ENCODE measurements at regions of chr17 and their contacts with region 1.

Region 1: GRCh38 chr17:29369831-29370735 is 20.1 kb upstream of the TAOK1 start:
- DNase-seq: peak; percentile 15 to 72 (median 56)
- H3K4me3 ChIP-seq: peak overlapping the region; percentile 29
- H3K4me3 Mint-ChIP-seq: no peak overlapping the region
- H3K27ac ChIP-seq: no peak overlapping the region
- H3K27ac Mint-ChIP-seq: no peak overlapping the region
- H3K4me1 ChIP-seq: no peaks in the 10 kb centered on the region
- H3K4me1 Mint-ChIP-seq: no peaks in the 10 kb centered on the region
- H3K27me3 ChIP-seq: no peaks in the 10 kb centered on the region
- H3K27me3 Mint-ChIP-seq: peaks cover 0 to 3% of the 10 kb centered on the region in 2 donors

Region 2: GRCh38 chr17:29283271-29283895 is 86.7 kb before region 1 on chr17:
- CTCF ChIA-PET with region 1: no interaction called
- POLR2A ChIA-PET with region 1: no interaction called
- DNase-seq: no peak
- H3K4me3 ChIP-seq: no peak overlapping the region
- H3K4me3 Mint-ChIP-seq: peak overlapping the region; percentile 16 to 81 (median 54)
- H3K27ac ChIP-seq: no peak overlapping the region
- H3K27ac Mint-ChIP-seq: peak overlapping the region; percentile 2 to 87 (median 40)
- H3K4me1 ChIP-seq: peaks cover 49% of the 10 kb centered on the region
- H3K4me1 Mint-ChIP-seq: peaks cover 57 to 82% (median 71%) of the 10 kb centered on the region in 3 donors
- H3K27me3 ChIP-seq: no peaks in the 10 kb centered on the region
- H3K27me3 Mint-ChIP-seq: peaks cover 0 to 2% of the 10 kb centered on the region in 2 donors

Region 3: DNA sequence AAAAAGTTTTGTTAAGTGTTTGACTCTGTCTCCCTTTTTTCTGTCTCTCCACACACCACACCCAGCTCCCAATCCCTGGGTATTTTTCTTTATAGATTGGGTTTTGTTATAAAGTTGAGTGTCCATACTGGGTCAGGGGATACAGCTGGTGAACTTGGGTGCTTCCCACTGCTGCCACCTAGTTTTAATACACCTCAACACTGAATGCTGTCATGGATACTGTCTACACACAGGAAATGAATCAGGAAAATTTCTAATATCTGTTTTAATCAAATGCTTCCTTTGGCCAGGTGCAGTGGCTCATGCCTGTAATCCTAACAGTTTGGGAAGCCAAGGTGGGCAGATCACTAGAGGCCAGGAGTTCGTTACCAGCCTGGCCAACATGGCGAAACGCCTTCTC is 14.8 kb after region 1 on chr17:
- CTCF ChIA-PET with region 1: interaction called, 16 read pairs
- POLR2A ChIA-PET with region 1: no interaction called
- DNase-seq: no peak
- H3K4me3 ChIP-seq: no peak overlapping the region
- H3K4me3 Mint-ChIP-seq: no peak overlapping the region
- H3K27ac ChIP-seq: no peak overlapping the region
- H3K27ac Mint-ChIP-seq: no peak overlapping the region
- H3K4me1 ChIP-seq: peaks cover 4% of the 10 kb centered on the region
- H3K4me1 Mint-ChIP-seq: peaks cover 5 to 6% (median 5%) of the 10 kb centered on the region in 3 donors
- H3K27me3 ChIP-seq: no peaks in the 10 kb centered on the region
- H3K27me3 Mint-ChIP-seq: no peaks in the 10 kb centered on the region

Region 4: DNA sequence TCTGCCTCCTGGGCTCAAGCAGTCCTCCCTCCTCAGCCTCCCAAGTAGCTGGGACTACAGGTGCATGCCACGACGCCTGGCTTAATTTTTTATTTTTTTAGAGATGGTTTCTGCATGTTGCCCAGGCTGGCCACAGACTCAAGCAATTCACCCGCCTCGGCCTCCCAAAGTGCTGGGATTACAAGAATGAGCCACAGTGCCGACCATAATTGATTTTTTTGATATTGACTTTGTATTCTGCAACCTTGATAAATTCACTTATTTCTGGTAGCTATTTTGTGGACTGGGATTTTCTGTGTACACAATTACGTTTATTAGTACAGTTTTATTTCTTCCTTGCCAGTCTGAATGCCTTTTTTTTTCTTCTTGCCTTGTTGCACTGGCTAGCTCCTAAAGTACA is 50.0 kb after region 1 on chr17:
- CTCF ChIA-PET with region 1: no interaction called
- POLR2A ChIA-PET with region 1: no interaction called
- DNase-seq: no peak
- H3K4me3 ChIP-seq: no peak overlapping the region
- H3K4me3 Mint-ChIP-seq: no peak overlapping the region
- H3K27ac ChIP-seq: no peak overlapping the region
- H3K27ac Mint-ChIP-seq: peak overlapping the region in 1 of 8 donors; percentile 66
- H3K4me1 ChIP-seq: no peaks in the 10 kb centered on the region
- H3K4me1 Mint-ChIP-seq: peaks cover 23 to 47% (median 31%) of the 10 kb centered on the region in 3 donors
- H3K27me3 ChIP-seq: no peaks in the 10 kb centered on the region
- H3K27me3 Mint-ChIP-seq: no peaks in the 10 kb centered on the region

Region 5: DNA sequence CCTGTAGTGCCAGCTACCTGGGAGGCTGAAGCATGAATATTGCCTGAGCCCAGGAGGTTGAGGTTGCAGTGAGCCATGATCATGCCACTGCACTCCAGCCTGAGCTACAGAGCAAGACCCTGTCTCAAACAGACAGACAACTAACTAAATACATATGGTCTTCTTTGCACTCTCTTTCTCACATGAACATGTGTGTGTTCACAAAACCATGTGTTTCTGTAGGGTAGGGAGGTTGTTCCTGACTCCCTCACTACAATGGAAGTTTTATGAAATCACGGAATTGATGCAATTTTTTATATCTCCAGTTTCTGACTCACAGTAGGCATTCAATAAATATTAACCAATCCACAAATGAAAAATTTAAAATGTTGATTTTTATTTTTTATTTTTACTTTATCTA is 148.3 kb after region 1 on chr17:
- CTCF ChIA-PET with region 1: interaction called, 4 read pairs
- POLR2A ChIA-PET with region 1: interaction called, 12 read pairs
- DNase-seq: no peak
- H3K4me3 ChIP-seq: no peak overlapping the region
- H3K4me3 Mint-ChIP-seq: no peak overlapping the region
- H3K27ac ChIP-seq: no peak overlapping the region
- H3K27ac Mint-ChIP-seq: no peak overlapping the region
- H3K4me1 ChIP-seq: no peaks in the 10 kb centered on the region
- H3K4me1 Mint-ChIP-seq: peaks cover 0 to 2% (median 0%) of the 10 kb centered on the region in 3 donors
- H3K27me3 ChIP-seq: no peaks in the 10 kb centered on the region
- H3K27me3 Mint-ChIP-seq: no peaks in the 10 kb centered on the region

Region 6: GRCh38 chr17:29533976-29534375 is 163.9 kb after region 1 on chr17:
- CTCF ChIA-PET with region 1: interaction called, 38 read pairs
- POLR2A ChIA-PET with region 1: no interaction called
- DNase-seq: no peak
- H3K4me3 ChIP-seq: no peak overlapping the region
- H3K4me3 Mint-ChIP-seq: no peak overlapping the region
- H3K27ac ChIP-seq: no peak overlapping the region
- H3K27ac Mint-ChIP-seq: peak overlapping the region in 2 of 8 donors; percentile 33 to 36
- H3K4me1 ChIP-seq: no peaks in the 10 kb centered on the region
- H3K4me1 Mint-ChIP-seq: no peaks in the 10 kb centered on the region
- H3K27me3 ChIP-seq: no peaks in the 10 kb centered on the region
- H3K27me3 Mint-ChIP-seq: no peaks in the 10 kb centered on the region

Region 7: GRCh38 chr17:29568331-29569244 is 198.5 kb after region 1 on chr17 and contains the start of gene TP53I13:
- CTCF ChIA-PET with region 1: interaction called, 46 read pairs
- POLR2A ChIA-PET with region 1: interaction called, 6 read pairs
- DNase-seq: peak; percentile 78 to 92 (median 83)
- H3K4me3 ChIP-seq: peak within 1 kb of the TSS; percentile 59
- H3K4me3 Mint-ChIP-seq: peak within 1 kb of the TSS; percentile 91 to 99 (median 97)
- H3K27ac ChIP-seq: peak within 1 kb of the TSS; percentile 63
- H3K27ac Mint-ChIP-seq: peak within 1 kb of the TSS; percentile 81 to 98 (median 94)
- H3K4me1 ChIP-seq: peaks cover 25% of the 10 kb centered on the region
- H3K4me1 Mint-ChIP-seq: peaks cover 31 to 45% (median 38%) of the 10 kb centered on the region in 3 donors
- H3K27me3 ChIP-seq: no peaks in the 10 kb centered on the region
- H3K27me3 Mint-ChIP-seq: no peaks in the 10 kb centered on the region
- total RNA-seq, gene TP53I13: 71.3 to 75.5 TPM

Region 8: DNA sequence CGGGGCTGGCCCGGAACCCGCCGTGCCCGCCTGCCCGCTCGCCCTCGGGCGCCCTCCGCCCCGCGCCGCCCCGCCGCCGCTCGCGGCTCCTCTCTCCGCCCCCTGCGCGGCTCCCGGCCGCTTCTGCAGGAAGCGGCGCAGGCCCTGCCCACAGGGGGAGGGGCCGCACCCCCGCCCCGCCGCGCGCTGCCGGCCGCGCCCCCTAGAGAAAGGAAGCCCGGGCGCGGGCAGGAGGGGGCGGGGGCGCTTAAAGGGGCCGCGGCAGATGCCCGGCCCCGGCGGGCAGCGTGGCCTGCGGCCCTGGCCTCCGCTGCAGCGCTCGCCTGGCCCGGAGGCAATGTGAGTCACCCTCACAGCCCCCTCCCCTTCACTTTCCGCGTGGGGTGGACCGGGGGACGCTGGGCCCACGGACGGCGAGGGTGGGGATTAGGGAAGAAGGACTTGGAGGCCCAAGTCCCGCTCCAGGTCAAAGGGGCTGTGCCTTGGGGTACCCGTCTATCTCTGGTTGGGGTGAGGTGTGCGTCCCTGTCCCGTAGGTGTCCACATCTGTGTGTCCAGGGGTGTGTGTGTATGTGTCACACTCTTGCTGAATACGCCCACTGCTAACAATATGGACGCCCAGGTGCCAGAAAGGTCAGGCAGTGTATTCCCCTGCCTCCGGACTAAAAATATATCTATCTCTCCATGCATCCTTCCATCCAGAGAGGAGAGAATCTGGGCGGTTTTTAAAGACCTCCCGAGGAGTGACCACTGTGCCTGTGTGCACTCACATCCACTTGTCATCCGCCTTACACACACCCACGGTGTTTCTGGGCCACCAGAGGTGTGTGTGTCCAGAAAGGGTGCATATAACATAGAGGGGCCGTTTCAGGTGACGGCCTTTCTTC is 219.7 kb after region 1 on chr17 and contains the start of gene GIT1:
- CTCF ChIA-PET with region 1: interaction called, 14 read pairs
- POLR2A ChIA-PET with region 1: no interaction called
- DNase-seq: peak; percentile 80 to 88 (median 82)
- H3K4me3 ChIP-seq: peak within 1 kb of the TSS; percentile 88
- H3K4me3 Mint-ChIP-seq: peak within 1 kb of the TSS; percentile 89 to 95 (median 93)
- H3K27ac ChIP-seq: peak within 1 kb of the TSS; percentile 59
- H3K27ac Mint-ChIP-seq: peak within 1 kb of the TSS in 7 of 8 donors; percentile 83 to 97 (median 95)
- H3K4me1 ChIP-seq: peaks cover 76% of the 10 kb centered on the region
- H3K4me1 Mint-ChIP-seq: peaks cover 57 to 78% (median 68%) of the 10 kb centered on the region in 3 donors
- H3K27me3 ChIP-seq: no peaks in the 10 kb centered on the region
- H3K27me3 Mint-ChIP-seq: no peaks in the 10 kb centered on the region
- total RNA-seq, gene GIT1: 69.7 to 69.8 TPM